Activated T-helper 2 cell treated with anti-CD3 and anti-CD28 coated beads, Interferon-gamma antibody, Interleukin-2, Interleukin-4, amounts not matched to agents 10 μg/mL and 5 μg/mL and 100 μg/mL, durations not matched to agents 14 hours and 24 hours and 36 hours (primary cell): ENCODE measurements at regions of chrX and their contacts with region 1.

Region 1: DNA sequence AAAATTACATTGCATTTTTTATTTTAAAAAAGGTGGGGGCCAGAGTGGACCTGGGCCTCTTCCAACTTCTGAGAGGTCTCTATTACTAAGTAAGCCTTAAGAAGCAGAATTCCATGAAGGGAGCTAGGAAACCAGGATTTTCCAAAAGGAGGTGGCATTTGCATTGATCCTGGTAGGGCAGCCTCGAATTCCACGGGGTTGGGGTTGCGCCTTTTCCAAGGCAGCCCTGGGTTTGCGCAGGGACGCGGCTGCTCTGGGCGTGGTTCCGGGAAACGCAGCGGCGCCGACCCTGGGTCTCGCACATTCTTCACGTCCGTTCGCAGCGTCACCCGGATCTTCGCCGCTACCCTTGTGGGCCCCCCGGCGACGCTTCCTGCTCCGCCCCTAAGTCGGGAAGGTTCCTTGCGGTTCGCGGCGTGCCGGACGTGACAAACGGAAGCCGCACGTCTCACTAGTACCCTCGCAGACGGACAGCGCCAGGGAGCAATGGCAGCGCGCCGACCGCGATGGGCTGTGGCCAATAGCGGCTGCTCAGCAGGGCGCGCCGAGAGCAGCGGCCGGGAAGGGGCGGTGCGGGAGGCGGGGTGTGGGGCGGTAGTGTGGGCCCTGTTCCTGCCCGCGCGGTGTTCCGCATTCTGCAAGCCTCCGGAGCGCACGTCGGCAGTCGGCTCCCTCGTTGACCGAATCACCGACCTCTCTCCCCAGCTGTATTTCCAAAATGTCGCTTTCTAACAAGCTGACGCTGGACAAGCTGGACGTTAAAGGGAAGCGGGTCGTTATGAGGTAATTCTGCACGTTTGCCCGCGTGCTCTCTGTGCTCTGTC is at the start of gene PGK1:
- DNase-seq: peak; percentile 93
- H3K4me3 Mint-ChIP-seq: peak within 1 kb of the TSS; percentile 96
- H3K27ac Mint-ChIP-seq: peak within 1 kb of the TSS; percentile 87
- H3K4me1 Mint-ChIP-seq: peaks cover 32% of the 10 kb centered on the region
- H3K27me3 Mint-ChIP-seq: no peaks in the 10 kb centered on the region
- total RNA-seq, gene PGK1: 1,005 and 1,045 TPM in 2 replicates

Region 2: DNA sequence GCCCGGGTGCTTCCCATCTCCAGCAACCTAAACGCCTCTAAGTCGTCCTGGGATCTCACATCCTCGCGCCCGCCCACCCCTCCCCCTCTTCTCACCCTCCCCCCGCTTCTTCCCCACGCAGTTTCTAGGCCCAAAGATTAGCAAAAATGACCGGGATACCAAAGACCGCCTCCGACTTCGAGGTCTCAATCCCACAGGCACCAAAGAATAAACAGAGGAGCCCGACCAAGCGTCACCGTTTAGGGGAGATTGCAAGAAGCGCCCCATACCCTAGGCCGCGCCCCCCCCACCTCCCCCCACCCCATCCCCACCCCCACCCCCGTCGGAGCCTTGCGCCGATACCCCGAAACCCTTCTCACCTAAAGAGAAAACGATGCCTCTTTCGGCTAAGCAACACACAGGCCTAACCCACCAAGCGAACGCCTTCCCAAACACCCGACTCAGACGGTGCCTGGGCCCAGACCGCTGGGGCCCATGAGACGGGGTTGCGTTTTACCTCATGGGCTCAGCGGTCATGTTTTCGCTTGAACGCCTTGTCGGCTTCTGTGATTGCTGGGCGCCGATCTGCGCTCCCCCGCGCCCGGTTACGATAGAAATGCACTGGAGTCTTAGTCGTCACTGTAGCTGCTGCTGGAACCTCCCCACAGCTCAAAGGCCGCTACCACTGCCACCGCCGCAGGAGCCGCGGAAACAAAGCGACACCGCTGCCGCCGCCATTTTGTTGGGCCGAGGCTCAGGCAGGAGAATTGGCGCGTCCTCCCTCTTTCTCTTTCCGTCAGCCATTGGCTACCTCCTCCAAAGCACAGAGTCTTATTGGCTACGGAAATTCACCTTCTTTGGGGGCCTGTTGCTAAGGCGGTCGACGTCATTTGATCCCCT is 318.1 kb before region 1 on chrX and contains the start of gene ATRX:
- intact Hi-C with region 1: loop called (anchors 5 kb)
- DNase-seq: peak; percentile 71
- H3K4me3 Mint-ChIP-seq: peak within 1 kb of the TSS; percentile 100
- H3K27ac Mint-ChIP-seq: peak within 1 kb of the TSS; percentile 100
- H3K4me1 Mint-ChIP-seq: peaks cover 20% of the 10 kb centered on the region
- H3K27me3 Mint-ChIP-seq: no peaks in the 10 kb centered on the region
- total RNA-seq, gene ATRX: 74.4 and 82.5 TPM in 2 replicates

Region 3: GRCh38 chrX:77910108-77910840 is 193.6 kb before region 1 on chrX and contains the start of gene ATP7A:
- intact Hi-C with region 1: loop called (anchors 2 kb)
- DNase-seq: peak; percentile 86
- H3K4me3 Mint-ChIP-seq: peak within 1 kb of the TSS; percentile 93
- H3K27ac Mint-ChIP-seq: peak within 1 kb of the TSS; percentile 97
- H3K4me1 Mint-ChIP-seq: peaks cover 9% of the 10 kb centered on the region
- H3K27me3 Mint-ChIP-seq: no peaks in the 10 kb centered on the region
- total RNA-seq, gene ATP7A: 6.2 and 6.6 TPM in 2 replicates

Region 4: GRCh38 chrX:78019586-78020483 is 84.0 kb before region 1 on chrX:
- intact Hi-C with region 1: no loop called
- DNase-seq: no peak
- H3K4me3 Mint-ChIP-seq: no peak overlapping the region
- H3K27ac Mint-ChIP-seq: no peak overlapping the region
- H3K4me1 Mint-ChIP-seq: no peaks in the 10 kb centered on the region
- H3K27me3 Mint-ChIP-seq: no peaks in the 10 kb centered on the region

Region 5: GRCh38 chrX:78123190-78123589 is 19.4 kb after region 1 on chrX:
- intact Hi-C with region 1: loop called (anchors 2 kb)
- DNase-seq: no peak
- H3K4me3 Mint-ChIP-seq: peak overlapping the region; percentile 13
- H3K27ac Mint-ChIP-seq: peak overlapping the region; percentile 83
- H3K4me1 Mint-ChIP-seq: peaks cover 38% of the 10 kb centered on the region
- H3K27me3 Mint-ChIP-seq: no peaks in the 10 kb centered on the region

Region 6: DNA sequence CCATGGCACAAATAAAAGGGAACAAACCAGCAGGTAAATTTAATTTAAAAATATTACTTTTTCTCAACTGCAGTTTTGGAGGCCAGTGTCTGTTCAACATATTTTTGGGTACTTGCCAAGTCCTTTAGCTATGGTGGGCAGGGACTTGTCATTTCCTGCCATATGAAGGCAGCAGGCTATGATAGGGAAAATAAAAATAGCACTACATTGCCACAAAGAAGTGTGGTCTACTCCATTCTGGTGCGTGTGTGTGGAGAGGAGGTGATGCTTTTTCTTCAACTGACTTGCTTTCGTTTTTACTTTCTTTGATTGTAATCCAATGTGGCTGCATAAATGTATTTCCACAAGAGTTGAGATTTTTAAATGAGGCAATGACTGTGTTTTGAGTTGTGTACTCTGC is 1057.8 kb after region 1 on chrX:
- intact Hi-C with region 1: loop called (anchors 5 kb)
- DNase-seq: peak; percentile 43
- H3K4me3 Mint-ChIP-seq: peak overlapping the region; percentile 89
- H3K27ac Mint-ChIP-seq: peak overlapping the region; percentile 99
- H3K4me1 Mint-ChIP-seq: peaks cover 54% of the 10 kb centered on the region
- H3K27me3 Mint-ChIP-seq: no peaks in the 10 kb centered on the region